Dendritic cell treated with granulocyte-macrophage colony-stimulating factor and Interleukin-4, amounts not matched to agents 40 ng/mL and 50 ng/mL, for 4 days (primary cell): ENCODE measurements at regions of chr22 and their contacts with region 1.

Region 1: DNA sequence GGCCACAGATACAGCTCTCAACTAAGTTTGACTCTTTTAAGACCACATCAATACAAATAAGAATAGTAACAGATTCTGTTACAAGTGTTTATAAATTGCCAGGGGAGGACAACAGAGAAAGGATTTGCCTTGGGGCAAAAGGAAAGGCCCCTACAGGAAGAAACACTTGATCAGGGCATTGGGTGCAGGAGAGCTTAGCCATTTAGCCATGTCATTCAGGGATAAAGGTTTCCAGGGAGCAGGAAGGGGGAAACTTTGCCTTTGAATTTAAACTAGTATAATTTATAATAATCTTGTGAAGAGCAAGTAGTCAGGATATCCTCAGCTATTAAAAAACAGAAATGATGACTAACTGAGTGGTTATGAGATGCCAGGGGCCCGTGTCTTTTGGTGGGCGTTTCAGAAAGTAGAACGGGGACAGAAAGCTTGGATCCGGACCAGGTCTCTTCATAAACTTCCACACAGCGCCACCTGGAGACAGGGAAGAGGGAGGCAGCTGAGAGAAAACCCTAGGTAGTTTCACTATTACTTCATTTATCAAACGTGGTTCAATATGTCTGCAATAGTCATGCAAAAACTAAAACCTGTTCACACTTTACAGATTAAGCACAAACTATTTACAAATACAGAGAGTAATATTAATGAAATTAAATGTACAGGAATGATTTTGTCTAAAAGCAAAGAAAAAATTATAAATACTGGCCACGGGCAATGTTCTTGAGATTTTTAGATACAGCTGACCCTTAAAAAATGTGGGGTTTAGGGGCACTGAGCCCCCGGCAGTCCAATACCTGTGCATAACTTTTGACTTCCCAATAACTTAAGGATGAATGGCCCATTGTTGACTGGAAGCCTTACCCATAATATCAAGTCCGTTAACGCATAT is 11.0 kb upstream of the SLC5A4 start:
- H3K4me3 Mint-ChIP-seq: no peak overlapping the region
- H3K27ac Mint-ChIP-seq: no peak overlapping the region
- H3K4me1 Mint-ChIP-seq: peaks cover 5% of the 10 kb centered on the region
- H3K27me3 Mint-ChIP-seq: peaks cover 6% of the 10 kb centered on the region

Region 2: DNA sequence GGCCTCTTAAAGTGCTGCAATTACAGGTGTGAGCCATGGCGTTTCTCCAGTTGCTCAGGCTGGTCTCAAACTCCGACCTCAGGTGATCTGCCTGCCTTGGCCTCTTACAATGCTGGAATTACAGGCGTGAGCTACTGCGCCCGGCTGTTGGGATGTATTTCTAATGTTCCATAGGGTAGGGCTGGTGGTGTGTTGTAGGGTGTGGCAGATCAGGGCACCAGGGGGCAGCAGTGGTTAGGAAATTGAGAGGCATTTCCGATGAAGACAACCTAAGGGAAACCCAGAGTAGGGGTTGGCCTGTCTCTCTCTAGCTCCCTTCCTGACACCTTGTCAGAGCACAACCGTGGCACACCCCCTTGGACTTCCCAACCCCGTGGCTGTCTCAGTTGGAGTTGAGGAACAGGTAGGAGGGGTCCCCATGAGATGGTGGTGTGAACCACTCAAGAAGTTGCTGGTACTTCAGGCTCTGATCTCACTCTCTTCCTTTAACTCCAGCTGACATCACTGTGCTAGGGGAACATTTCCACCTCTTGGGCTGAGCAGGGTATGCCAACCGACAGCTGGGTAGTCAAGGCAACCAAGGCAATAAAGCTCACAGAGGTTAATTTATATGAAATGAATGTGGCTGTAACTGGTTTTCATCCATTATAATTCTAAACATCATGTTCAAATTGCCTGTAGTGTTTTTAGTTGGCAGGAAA is 288.8 kb before region 1 on chr22:
- intact Hi-C with region 1: loop called (anchors 1 kb)
- H3K4me3 Mint-ChIP-seq: no peak overlapping the region
- H3K27ac Mint-ChIP-seq: no peak overlapping the region
- H3K4me1 Mint-ChIP-seq: no peaks in the 10 kb centered on the region
- H3K27me3 Mint-ChIP-seq: peaks cover 14% of the 10 kb centered on the region

Region 3: GRCh38 chr22:32103658-32104315 is 162.3 kb before region 1 on chr22:
- intact Hi-C with region 1: loop called (anchors 1 kb)
- H3K4me3 Mint-ChIP-seq: no peak overlapping the region
- H3K27ac Mint-ChIP-seq: no peak overlapping the region
- H3K4me1 Mint-ChIP-seq: no peaks in the 10 kb centered on the region
- H3K27me3 Mint-ChIP-seq: peaks cover 12% of the 10 kb centered on the region

Region 4: GRCh38 chr22:32144496-32145274 is 121.4 kb before region 1 on chr22:
- intact Hi-C with region 1: loop called (anchors 10 kb)
- H3K4me3 Mint-ChIP-seq: no peak overlapping the region
- H3K27ac Mint-ChIP-seq: peak overlapping the region; percentile 55
- H3K4me1 Mint-ChIP-seq: peaks cover 56% of the 10 kb centered on the region
- H3K27me3 Mint-ChIP-seq: no peaks in the 10 kb centered on the region

Region 5: GRCh38 chr22:32202539-32203180 is 63.5 kb before region 1 on chr22:
- intact Hi-C with region 1: loop called (anchors 2 kb)
- H3K4me3 Mint-ChIP-seq: peak overlapping the region; percentile 46
- H3K27ac Mint-ChIP-seq: no peak overlapping the region
- H3K4me1 Mint-ChIP-seq: peaks cover 47% of the 10 kb centered on the region
- H3K27me3 Mint-ChIP-seq: peaks cover 61% of the 10 kb centered on the region

Region 6: GRCh38 chr22:32378707-32379272 is 112.7 kb after region 1 on chr22:
- intact Hi-C with region 1: no loop called
- H3K4me3 Mint-ChIP-seq: no peak overlapping the region
- H3K27ac Mint-ChIP-seq: no peak overlapping the region
- H3K4me1 Mint-ChIP-seq: no peaks in the 10 kb centered on the region
- H3K27me3 Mint-ChIP-seq: peaks cover 3% of the 10 kb centered on the region

Region 7: DNA sequence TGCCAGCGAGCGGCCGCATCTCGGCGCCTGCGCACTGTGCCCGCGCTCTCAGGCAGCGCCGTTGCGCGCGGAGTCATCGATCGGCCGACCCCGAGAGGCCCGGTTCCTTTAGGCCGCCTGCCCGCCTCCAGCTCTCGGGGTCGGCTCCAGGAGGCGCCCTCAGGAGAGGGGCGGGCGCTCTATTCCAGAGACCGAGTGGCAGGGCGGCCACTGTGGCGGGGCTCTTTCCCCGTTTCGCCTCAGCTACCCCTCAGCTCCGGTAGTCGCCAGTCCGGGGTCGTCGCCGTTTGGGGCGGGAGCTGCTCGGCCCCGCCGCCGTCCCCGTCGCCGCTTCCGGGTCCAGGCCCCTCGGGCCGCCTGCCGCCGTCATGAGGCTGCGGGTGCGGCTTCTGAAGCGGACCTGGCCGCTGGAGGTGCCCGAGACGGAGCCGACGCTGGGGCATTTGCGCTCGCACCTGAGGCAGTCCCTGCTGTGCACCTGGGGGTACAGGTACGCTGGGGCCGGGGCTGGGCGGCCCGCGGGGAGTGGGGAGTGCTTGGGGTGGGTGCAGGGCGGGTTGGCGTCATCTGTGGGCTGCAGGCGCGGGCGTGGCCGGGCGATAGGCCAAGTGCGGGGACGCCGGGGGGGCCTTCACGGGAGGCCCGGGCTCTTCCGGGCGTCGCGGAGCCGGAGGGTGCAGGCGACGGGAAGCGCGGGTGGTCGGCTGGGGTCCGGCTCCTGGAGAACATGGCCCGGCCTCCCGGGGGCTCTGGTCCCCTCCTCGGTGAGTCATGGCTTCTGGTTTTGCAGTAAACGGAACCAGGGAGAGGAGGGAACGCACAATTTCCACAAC is 208.7 kb after region 1 on chr22 and contains the start of gene FBXO7:
- intact Hi-C with region 1: loop called (anchors 2 kb)
- H3K4me3 Mint-ChIP-seq: peak within 1 kb of the TSS; percentile 87
- H3K27ac Mint-ChIP-seq: peak within 1 kb of the TSS; percentile 90
- H3K4me1 Mint-ChIP-seq: peaks cover 41% of the 10 kb centered on the region
- H3K27me3 Mint-ChIP-seq: no peaks in the 10 kb centered on the region